Activated naive CD4-positive, alpha-beta T cell treated with anti-CD3 and anti-CD28 coated beads for 36 hours (primary cell): ENCODE measurements at regions of chr11 and their contacts with region 1.

Region 1: GRCh38 chr11:85799142-85799541 is 11.8 kb downstream of the SYTL2 start:
- DNase-seq: no peak
- H3K4me3 Mint-ChIP-seq: no peak overlapping the region
- H3K27ac Mint-ChIP-seq: no peak overlapping the region
- H3K4me1 Mint-ChIP-seq: peaks cover 13% of the 10 kb centered on the region
- H3K27me3 Mint-ChIP-seq: no peaks in the 10 kb centered on the region

Region 2: DNA sequence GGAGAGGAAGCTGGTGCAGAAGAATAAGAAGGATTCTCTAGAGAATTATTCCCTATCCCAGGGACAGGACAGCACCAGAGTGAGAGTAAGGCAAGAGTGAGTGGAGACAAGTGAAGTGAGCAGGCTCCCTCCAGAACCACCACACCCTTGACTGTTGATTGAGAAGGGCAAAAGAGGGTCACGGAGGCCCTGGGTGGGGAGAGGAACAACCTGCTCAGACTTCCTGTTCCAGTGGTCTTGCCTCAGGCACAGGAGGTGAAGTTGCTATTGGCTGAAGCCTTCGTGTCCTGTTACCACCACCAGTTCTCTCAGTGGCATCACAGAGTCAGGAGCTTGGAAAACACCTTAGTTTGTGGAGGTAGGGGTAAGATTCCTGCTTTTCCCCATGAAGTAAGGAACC is 61.4 kb before region 1 on chr11:
- CTCF ChIA-PET with region 1: no interaction called
- intact Hi-C with region 1: no loop called
- DNase-seq: no peak
- H3K4me3 Mint-ChIP-seq: no peak overlapping the region
- H3K27ac Mint-ChIP-seq: no peak overlapping the region
- H3K4me1 Mint-ChIP-seq: peaks cover 31% of the 10 kb centered on the region
- H3K27me3 Mint-ChIP-seq: no peaks in the 10 kb centered on the region

Region 3: DNA sequence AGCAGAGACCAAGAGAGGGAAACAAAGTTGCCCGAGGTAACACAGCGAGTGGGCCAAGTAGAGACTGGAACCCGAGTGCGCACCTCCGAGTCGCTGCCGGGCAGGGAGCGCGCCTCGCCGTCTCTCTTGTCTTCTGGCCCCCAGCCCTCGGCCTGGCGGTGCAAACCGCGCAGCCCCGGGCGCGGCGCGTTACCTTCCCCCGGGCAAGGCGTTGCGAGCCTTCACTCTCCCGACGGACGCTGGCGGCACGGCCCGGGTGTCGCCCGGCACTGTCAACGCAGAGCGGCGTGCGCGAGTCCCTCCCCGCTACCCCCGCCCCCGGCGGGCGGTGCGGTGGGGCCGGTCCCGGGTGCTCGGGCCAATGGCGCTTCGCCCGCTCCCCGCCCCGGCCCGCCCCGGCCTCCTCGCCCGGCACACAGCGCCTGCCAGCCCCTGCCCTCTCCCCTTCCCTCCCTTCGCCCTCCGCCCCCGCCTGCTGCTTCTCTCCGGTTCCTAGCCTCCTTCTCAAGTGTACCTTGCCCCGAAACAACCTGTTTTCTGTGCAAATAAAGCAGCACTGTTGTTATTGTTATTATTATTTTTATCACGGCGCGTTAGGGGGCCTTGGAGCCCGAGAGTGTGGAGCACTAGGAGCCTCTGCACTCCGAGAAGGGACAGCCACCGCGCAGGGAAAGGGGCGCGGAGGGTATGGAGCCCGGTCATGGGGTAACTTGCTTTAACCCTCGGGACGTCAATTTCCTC is 11.9 kb after region 1 on chr11 and contains the start of gene SYTL2:
- CTCF ChIA-PET with region 1: interaction called, 3 read pairs
- intact Hi-C with region 1: loop called (anchors 1 kb)
- DNase-seq: peak; percentile 77
- H3K4me3 Mint-ChIP-seq: peak within 1 kb of the TSS; percentile 81
- H3K27ac Mint-ChIP-seq: no peak within 1 kb of the TSS
- H3K4me1 Mint-ChIP-seq: peaks cover 33% of the 10 kb centered on the region
- H3K27me3 Mint-ChIP-seq: no peaks in the 10 kb centered on the region
- total RNA-seq, gene SYTL2: 13.8 to 13.9 TPM